Activated CD8-positive, alpha-beta T cell treated with anti-CD3 and anti-CD28 coated beads, Interleukin-2, amount 10 ng/mL, durations not matched to agents 7 days and 5 days (primary cell): ENCODE measurements at regions of chr22 and their contacts with region 1.

Region 1: GRCh38 chr22:16917144-16918003 is 90.6 kb downstream of the GAB4 start:
- DNase-seq: peak; percentile 66
- ATAC-seq: peak; percentile 33
- H3K4me3 Mint-ChIP-seq: no peak overlapping the region
- H3K27ac Mint-ChIP-seq: no peak overlapping the region
- H3K4me1 Mint-ChIP-seq: peaks cover 7% of the 10 kb centered on the region
- H3K27me3 Mint-ChIP-seq: peaks cover 21% of the 10 kb centered on the region

Region 2: DNA sequence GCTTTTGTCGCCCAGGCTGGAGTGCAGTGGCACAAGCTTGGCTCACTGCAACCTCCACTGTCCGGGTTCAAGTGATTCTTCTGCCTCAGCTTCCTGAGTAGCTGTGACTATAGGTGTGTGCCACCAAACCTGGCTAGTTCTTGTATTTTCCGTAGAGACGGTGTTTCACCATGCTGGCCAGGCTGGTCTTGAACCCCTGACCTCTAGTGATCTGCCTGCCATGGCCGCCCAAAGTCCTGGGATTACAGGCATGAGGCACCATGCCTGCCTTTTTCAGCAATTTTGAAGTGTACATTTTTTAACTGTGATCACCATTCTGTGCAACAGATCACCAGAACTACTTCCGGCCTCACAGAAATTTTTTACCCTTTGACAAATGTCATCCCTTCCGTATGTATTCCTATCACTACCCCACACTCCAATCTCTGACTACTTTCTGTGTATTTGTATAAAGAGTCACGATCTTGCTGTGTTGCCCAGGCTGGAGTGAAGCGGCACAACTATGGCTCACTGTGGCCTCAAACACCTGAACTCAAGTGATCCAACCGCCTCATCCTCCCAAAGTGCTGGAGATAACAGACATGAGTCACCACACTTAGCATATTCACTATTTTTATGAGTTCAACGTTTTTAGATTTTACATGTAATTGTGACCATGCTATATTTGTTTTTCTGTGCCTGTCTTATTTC is 136.2 kb before region 1 on chr22:
- CTCF ChIA-PET with region 1: no interaction called
- POLR2A ChIA-PET with region 1: no interaction called
- DNase-seq: no peak
- ATAC-seq: no peak
- H3K4me3 Mint-ChIP-seq: no peak overlapping the region
- H3K27ac Mint-ChIP-seq: no peak overlapping the region
- H3K4me1 Mint-ChIP-seq: no peaks in the 10 kb centered on the region
- H3K27me3 Mint-ChIP-seq: peaks cover 4% of the 10 kb centered on the region

Region 3: GRCh38 chr22:16932577-16932976 is 15.2 kb after region 1 on chr22:
- CTCF ChIA-PET with region 1: interaction called, 12 read pairs
- POLR2A ChIA-PET with region 1: no interaction called
- DNase-seq: no peak
- ATAC-seq: no peak
- H3K4me3 Mint-ChIP-seq: no peak overlapping the region
- H3K27ac Mint-ChIP-seq: no peak overlapping the region
- H3K4me1 Mint-ChIP-seq: no peaks in the 10 kb centered on the region
- H3K27me3 Mint-ChIP-seq: peaks cover 19% of the 10 kb centered on the region

Region 4: DNA sequence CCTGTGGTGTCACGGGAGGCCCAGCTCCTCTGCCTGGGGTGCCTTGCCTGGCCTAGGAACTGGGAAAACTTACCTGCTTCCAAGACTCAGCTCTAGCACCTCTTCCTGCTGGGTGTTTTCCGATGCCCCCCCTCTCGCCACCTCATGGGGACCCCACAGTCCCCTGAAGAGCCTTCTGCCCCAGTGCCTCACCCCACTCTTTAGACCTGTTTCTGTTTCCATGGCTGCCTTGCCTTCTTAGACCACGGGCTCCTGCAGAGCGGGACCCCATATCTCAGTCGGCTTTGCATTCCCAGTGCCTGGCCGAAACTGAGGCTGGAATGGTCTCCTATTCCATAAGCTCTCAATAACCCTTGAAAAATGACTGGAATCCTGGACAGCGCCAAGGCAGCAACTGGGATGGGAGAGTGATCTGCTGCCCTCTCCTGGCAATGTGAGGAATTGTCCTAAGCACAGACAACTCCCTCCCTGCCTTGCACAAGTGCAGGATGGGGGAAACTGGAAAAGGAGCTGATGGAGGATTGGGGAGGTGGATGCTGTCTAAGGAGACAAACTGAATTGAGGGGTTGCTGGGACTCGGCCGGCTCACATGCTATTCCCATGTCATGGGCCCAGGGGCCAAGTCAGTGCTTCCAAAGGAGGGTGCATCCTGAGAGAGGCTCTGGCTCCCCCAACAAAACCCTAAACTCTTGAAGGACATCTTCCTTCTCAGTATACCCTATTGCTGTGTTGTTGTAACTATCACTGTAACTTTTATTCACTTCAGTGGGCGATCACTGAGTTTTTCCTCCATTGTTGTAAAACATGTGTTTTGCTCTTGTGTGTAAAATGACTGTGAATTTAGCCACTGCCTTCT is 140.8 kb after region 1 on chr22:
- CTCF ChIA-PET with region 1: interaction called, 27 read pairs
- POLR2A ChIA-PET with region 1: no interaction called
- DNase-seq: peak; percentile 65
- ATAC-seq: peak; percentile 67
- H3K4me3 Mint-ChIP-seq: no peak overlapping the region
- H3K27ac Mint-ChIP-seq: no peak overlapping the region
- H3K4me1 Mint-ChIP-seq: peaks cover 4% of the 10 kb centered on the region
- H3K27me3 Mint-ChIP-seq: peaks cover 5% of the 10 kb centered on the region

Region 5: GRCh38 chr22:17213976-17214375 is 296.6 kb after region 1 on chr22:
- CTCF ChIA-PET with region 1: no interaction called
- POLR2A ChIA-PET with region 1: no interaction called
- DNase-seq: peak; percentile 56
- ATAC-seq: no peak
- H3K4me3 Mint-ChIP-seq: no peak overlapping the region
- H3K27ac Mint-ChIP-seq: peak overlapping the region; percentile 60
- H3K4me1 Mint-ChIP-seq: peaks cover 35% of the 10 kb centered on the region
- H3K27me3 Mint-ChIP-seq: no peaks in the 10 kb centered on the region